Breast epithelium (tissue), 4 donors: ENCODE measurements at regions of chr5 and their contacts with region 1.

Region 1: GRCh38 chr5:178439493-178440180 is 150.6 kb downstream of the COL23A1 start:
- DNase-seq: no peak
- H3K4me3 ChIP-seq: no peak overlapping the region
- H3K27ac ChIP-seq: no peak overlapping the region
- H3K4me1 ChIP-seq: no peaks in the 10 kb centered on the region
- H3K27me3 ChIP-seq: no peaks in the 10 kb centered on the region
- CTCF ChIP-seq: no peak
- POLR2A ChIP-seq: no peak

Region 2: DNA sequence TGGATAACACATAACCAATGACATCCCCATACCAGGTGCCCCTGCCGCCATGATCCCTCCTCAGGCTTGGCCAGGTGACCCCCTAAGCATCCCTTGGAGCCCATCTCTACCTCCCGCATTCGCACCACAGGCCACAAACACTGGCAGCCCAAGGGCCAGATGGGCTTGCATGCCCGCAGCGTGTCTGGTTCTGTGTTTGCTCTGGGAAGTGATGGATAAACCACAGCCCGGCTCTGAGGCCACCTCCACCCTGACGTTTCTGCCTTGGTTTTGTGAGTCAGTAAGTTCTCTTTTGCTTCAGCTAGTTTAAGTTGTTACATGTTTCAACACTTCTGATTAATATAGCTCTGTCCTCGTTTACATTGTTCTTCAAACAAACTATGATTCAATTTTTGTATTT is 34.6 kb before region 1 on chr5:
- intact Hi-C with region 1: no loop called
- DNase-seq: no peak
- H3K4me3 ChIP-seq: no peak overlapping the region
- H3K27ac ChIP-seq: no peak overlapping the region
- H3K4me1 ChIP-seq: no peaks in the 10 kb centered on the region
- H3K27me3 ChIP-seq: peaks cover 0 to 4% of the 10 kb centered on the region in 2 donors
- CTCF ChIP-seq: no peak
- POLR2A ChIP-seq: no peak

Region 3: GRCh38 chr5:178421699-178422399 is 17.8 kb before region 1 on chr5:
- intact Hi-C with region 1: loop called (anchors 1 kb)
- DNase-seq: no peak
- H3K4me3 ChIP-seq: no peak overlapping the region
- H3K27ac ChIP-seq: no peak overlapping the region
- H3K4me1 ChIP-seq: no peaks in the 10 kb centered on the region
- H3K27me3 ChIP-seq: no peaks in the 10 kb centered on the region
- CTCF ChIP-seq: no peak
- POLR2A ChIP-seq: no peak